ENCODE measurements at regions of chr6 and their contacts with region 1.

Region 1: GRCh38 chr6:125779924-125780539 is 10.7 kb upstream of the NCOA7 start:
- DNase-seq: no peak
- H3K4me3 ChIP-seq: peak overlapping the region; percentile 73
- CTCF ChIP-seq: no peak

Region 2: GRCh38 chr6:125301435-125302391 is 478.3 kb before region 1 on chr6 and contains the start of gene HDDC2:
- CTCF ChIA-PET with region 1: no interaction called
- POLR2A ChIA-PET with region 1: interaction called, 12 read pairs
- DNase-seq: no peak
- H3K4me3 ChIP-seq: peak within 1 kb of the TSS; percentile 69
- CTCF ChIP-seq: no peak